ENCODE measurements at regions of chrX and their contacts with region 1.

Region 1: DNA sequence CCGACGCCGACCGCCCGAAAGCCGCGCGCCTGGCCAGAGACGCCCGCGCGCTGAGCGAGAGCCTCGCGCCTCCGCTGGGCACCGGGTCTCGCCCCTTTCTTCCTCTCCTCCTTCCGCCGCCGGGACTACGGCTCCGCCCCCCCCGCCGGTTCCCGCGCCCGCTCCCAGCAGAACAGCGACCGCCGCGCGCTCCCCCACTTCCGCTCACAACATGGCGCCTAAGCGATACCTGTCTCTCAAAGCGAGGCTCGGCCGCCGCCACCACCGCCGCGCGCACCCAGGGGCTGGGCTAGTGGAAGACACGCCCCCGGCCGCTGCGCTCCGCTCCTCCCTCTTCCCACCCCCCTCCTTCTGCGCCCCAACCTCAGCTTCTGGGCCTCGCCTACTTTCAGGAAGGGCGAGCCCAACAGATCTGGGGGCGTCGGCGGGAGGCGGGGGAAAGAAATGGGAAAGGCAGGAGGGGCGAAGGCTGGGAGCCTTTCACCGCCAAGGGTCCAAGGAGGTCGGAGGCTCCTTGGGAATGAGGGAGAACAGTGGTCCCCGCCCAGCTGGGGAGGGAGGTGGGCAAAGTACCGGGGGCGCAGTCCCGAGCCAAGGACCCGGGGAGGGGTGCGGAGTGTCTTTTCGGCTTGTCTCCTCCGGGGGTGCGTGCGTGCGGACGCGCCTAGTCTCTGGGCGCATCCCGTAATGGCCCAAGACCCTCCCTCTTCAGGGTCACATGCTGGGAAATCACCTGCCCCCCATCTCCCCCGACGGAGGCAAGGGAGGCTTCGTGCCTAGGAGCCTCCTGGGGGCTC is at the start of gene RPS6KA3:
- DNase-seq: peak; percentile 85
- H3K4me3 Mint-ChIP-seq: peak within 1 kb of the TSS; percentile 98
- H3K27ac Mint-ChIP-seq: peak within 1 kb of the TSS; percentile 97
- H3K4me1 Mint-ChIP-seq: peaks cover 20% of the 10 kb centered on the region
- H3K27me3 Mint-ChIP-seq: peaks cover 8% of the 10 kb centered on the region
- total RNA-seq, gene RPS6KA3: 58.8 and 60.6 TPM in 2 replicates

Region 2: DNA sequence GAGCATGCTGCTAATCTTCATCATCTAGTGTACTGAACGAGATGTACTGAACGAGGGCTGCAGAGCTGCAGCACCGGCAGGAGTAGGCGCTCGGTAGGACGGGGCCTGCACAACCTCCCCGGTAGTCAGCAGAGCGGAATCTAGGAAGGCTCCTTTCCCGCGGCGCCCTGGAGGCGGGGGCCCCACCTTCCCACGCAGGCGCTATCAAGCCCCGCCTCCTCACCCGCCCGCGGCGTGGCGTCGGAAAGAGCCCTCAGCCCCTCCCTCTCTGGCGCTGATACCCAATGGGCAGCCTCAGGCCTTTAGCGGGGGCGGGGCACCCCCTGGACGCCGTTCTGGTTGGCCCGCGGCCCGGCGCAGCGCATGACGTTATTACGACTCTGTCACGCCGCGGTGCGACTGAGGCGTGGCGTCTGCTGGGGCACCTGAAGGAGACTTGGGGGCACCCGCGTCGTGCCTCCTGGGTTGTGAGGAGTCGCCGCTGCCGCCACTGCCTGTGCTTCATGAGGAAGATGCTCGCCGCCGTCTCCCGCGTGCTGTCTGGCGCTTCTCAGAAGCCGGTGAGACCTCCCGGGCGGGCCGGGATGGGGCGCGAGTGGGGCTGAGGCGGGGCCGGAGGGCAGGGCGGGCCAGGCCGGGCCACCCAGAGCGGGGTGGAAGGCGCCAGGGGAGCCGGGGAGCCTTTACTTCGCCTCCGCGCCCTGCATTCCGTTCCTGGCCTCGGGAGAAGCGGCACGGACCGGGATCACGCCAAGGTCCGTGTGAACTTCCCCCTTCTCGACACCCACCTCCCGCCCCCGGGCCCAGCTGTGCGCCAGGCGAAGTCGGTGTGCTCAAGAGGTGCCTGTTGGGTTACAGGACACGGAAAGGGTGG is 923.2 kb before region 1 on chrX and contains the start of gene PDHA1:
- intact Hi-C with region 1: loop called (anchors 10 kb)
- DNase-seq: peak; percentile 90
- H3K4me3 Mint-ChIP-seq: peak within 1 kb of the TSS; percentile 90
- H3K27ac Mint-ChIP-seq: peak within 1 kb of the TSS; percentile 90
- H3K4me1 Mint-ChIP-seq: peaks cover 13% of the 10 kb centered on the region
- H3K27me3 Mint-ChIP-seq: peaks cover 2% of the 10 kb centered on the region
- total RNA-seq, gene PDHA1: 213 and 218 TPM in 2 replicates

Region 3: DNA sequence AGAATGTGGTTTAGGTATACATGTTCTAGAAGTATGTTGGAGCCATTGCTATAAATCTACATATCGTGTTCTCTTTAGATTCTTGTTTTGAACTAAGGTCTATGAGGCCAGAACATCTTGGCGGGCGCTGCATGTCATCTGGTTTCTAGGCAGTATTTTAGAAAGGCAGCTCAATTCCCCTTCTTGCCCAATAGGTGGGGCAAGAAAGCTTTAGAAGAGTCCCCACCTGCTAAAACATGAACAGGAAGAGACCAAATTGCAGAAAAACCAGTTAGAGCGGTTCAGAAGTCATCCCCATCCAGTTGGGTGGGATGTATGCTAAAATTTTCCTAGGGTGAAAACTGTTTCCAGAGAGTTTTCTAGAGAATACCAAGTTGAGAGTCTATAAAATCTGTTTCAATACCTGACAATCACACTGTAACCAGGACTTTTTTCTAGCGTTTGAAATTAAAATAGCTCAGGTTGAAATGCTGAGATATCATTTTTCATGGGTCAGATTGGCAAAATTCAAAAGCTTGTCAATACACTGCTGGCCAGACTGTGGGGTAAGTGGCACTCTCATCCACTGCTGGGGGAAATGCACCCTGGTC is 362.1 kb before region 1 on chrX:
- intact Hi-C with region 1: no loop called
- DNase-seq: no peak
- H3K4me3 Mint-ChIP-seq: no peak overlapping the region
- H3K27ac Mint-ChIP-seq: no peak overlapping the region
- H3K4me1 Mint-ChIP-seq: peaks cover 19% of the 10 kb centered on the region
- H3K27me3 Mint-ChIP-seq: no peaks in the 10 kb centered on the region

Region 4: GRCh38 chrX:20224814-20225487 is 42.1 kb before region 1 on chrX:
- intact Hi-C with region 1: loop called (anchors 1 kb)
- DNase-seq: no peak
- H3K4me3 Mint-ChIP-seq: no peak overlapping the region
- H3K27ac Mint-ChIP-seq: peak overlapping the region; percentile 10
- H3K4me1 Mint-ChIP-seq: peaks cover 21% of the 10 kb centered on the region
- H3K27me3 Mint-ChIP-seq: no peaks in the 10 kb centered on the region

Region 5: DNA sequence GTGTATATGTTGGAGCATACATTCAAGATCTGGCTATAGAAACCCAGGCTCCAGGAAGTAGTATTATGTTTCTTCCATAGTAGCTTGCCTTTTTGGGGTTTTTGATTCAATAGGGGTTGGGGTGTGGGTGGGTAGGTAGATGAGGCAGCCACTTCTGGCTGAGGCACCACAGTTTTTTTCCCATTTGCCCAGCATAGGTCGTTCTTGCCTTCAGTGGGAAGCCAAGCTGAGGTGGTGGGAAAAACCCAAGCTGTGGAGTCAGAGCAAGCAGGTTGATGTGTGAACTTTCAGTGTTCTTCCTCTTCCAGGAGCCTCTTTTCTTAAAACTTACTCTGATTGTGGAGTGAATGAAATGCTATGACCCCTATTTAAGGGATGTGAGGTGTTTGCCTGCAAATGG is 66.7 kb after region 1 on chrX:
- intact Hi-C with region 1: loop called (anchors 2 kb)
- DNase-seq: no peak
- H3K4me3 Mint-ChIP-seq: no peak overlapping the region
- H3K27ac Mint-ChIP-seq: no peak overlapping the region
- H3K4me1 Mint-ChIP-seq: peaks cover 14% of the 10 kb centered on the region
- H3K27me3 Mint-ChIP-seq: no peaks in the 10 kb centered on the region

Region 6: GRCh38 chrX:20442597-20442996 is 175.6 kb after region 1 on chrX:
- intact Hi-C with region 1: loop called (anchors 2 kb)
- DNase-seq: peak; percentile 65
- H3K4me3 Mint-ChIP-seq: no peak overlapping the region
- H3K27ac Mint-ChIP-seq: no peak overlapping the region
- H3K4me1 Mint-ChIP-seq: peaks cover 54% of the 10 kb centered on the region
- H3K27me3 Mint-ChIP-seq: peaks cover 2% of the 10 kb centered on the region

Region 7: GRCh38 chrX:20594985-20595384 is 328.0 kb after region 1 on chrX:
- intact Hi-C with region 1: loop called (anchors 1 kb)
- DNase-seq: no peak
- H3K4me3 Mint-ChIP-seq: no peak overlapping the region
- H3K27ac Mint-ChIP-seq: no peak overlapping the region
- H3K4me1 Mint-ChIP-seq: peaks cover 25% of the 10 kb centered on the region
- H3K27me3 Mint-ChIP-seq: peaks cover 2% of the 10 kb centered on the region

Region 8: GRCh38 chrX:21839334-21840192 is 1572.6 kb after region 1 on chrX and contains the start of gene MBTPS2:
- intact Hi-C with region 1: loop called (anchors 2 kb)
- DNase-seq: peak; percentile 73
- H3K4me3 Mint-ChIP-seq: peak within 1 kb of the TSS; percentile 88
- H3K27ac Mint-ChIP-seq: peak within 1 kb of the TSS; percentile 90
- H3K4me1 Mint-ChIP-seq: peaks cover 14% of the 10 kb centered on the region
- H3K27me3 Mint-ChIP-seq: no peaks in the 10 kb centered on the region
- total RNA-seq, gene MBTPS2: 10.5 and 11.3 TPM in 2 replicates

Measured in activated T-helper 1 cell treated with anti-CD3 and anti-CD28 coated beads, Interleukin-12 subunit alpha, Interleukin-12 subunit beta, Interleukin-2, Interleukin-4 antibody, amounts not matched to agents 30 ng/mL and 10 ng/mL and 1 ng/mL, durations not matched to agents 14 hours and 24 hours and 36 hours (primary cell).